Breast epithelium (tissue), 4 donors: ENCODE measurements at regions of chr20 and their contacts with region 1.

Region 1: DNA sequence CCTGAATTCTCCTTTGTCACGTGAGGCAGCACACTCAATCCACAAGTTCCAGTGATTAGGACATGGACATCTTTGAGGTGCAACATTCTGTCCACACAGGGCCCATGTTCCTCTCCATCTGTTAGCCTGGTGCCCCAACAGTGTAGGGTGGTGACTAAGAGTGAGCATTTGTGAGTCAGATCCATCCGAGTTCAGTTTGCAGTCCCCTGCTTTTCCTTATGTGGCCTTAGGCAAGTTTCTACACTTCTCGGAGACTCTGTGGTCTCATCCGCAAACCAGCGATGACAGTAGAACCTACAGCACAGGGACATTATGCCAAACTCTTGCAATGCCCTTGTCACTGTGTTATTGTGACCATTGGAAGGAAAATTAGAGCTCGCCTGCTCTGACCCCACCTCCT is 178.7 kb upstream of the CDH4 start:
- DNase-seq: no peak
- H3K4me3 ChIP-seq: no peak overlapping the region
- H3K27ac ChIP-seq: no peak overlapping the region
- H3K4me1 ChIP-seq: no peaks in the 10 kb centered on the region
- H3K27me3 ChIP-seq: no peaks in the 10 kb centered on the region
- CTCF ChIP-seq: no peak
- POLR2A ChIP-seq: no peak

Region 2: DNA sequence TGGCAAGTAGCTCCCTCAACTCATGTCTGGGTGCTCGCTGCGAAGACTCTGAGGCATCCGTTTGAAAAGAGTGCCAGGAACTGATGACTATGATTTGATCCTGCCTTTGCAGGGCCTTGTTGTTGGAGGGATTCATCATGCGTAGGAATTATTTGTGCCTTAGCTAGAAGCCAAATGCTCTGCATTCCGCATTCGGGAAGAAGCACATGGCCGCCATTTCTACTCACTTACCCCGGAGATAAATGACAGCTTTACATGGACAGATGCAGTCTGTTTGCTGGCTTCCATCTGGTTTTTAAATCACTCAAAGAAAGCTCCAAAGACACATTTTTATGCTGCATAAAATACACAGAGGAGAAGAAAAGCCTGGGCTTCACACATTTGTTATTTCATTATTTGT is 184.6 kb before region 1 on chr20:
- intact Hi-C with region 1: no loop called
- DNase-seq: no peak
- H3K4me3 ChIP-seq: no peak overlapping the region
- H3K27ac ChIP-seq: no peak overlapping the region
- H3K4me1 ChIP-seq: no peaks in the 10 kb centered on the region
- H3K27me3 ChIP-seq: no peaks in the 10 kb centered on the region
- CTCF ChIP-seq: no peak
- POLR2A ChIP-seq: no peak

Region 3: GRCh38 chr20:60926519-60927230 is 146.7 kb before region 1 on chr20:
- intact Hi-C with region 1: loop called (anchors 5 kb)
- DNase-seq: no peak
- H3K4me3 ChIP-seq: no peak overlapping the region
- H3K27ac ChIP-seq: no peak overlapping the region
- H3K4me1 ChIP-seq: no peaks in the 10 kb centered on the region
- H3K27me3 ChIP-seq: peaks cover 0 to 6% of the 10 kb centered on the region in 2 donors
- CTCF ChIP-seq: no peak
- POLR2A ChIP-seq: no peak